Activated CD4-positive, alpha-beta T cell treated with anti-CD3 and anti-CD28 coated beads for 36 hours (primary cell): ENCODE measurements at regions of chr6 and their contacts with region 1.

Region 1: DNA sequence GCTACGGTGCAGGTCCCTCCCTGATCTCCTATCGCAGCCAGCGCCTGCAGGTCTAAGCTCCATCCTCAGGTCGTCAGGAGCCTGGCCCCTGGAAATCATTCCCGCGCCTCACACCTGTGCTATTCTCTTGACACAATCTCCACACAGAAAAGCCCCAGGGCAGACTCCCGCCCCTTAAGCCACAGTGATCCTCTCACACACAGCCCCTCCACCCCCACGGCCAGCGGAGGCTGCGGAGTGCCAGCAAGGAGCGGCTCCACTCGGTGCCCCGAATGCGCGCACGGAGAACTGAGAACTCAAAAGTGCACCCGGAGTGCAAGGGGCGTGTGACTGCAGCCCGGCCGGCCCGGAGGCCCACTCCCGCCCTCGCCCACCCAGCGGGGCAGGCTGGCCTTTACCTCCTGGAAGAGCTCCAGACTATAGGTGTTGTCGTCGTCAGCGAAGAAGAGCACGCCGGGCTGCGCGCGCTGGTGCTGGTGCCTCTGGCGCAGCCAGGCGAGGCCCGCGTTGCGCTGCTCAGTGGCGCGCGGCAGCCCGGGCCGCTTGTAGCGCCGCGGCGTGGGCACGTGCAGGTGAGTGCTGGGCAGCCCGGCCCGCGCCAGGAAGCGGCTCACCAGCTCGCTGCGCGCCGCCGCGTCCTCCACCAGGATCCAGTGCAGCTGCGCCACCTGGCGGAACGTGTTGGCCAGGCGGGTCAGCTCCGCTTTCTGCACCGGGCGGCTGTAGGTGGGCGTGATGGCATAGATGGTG is 1.2 kb downstream of the B3GAT2 start:
- DNase-seq: peak; percentile 94
- ATAC-seq: peak; percentile 95
- H3K4me3 Mint-ChIP-seq: peak overlapping the region; percentile 64
- H3K27ac Mint-ChIP-seq: no peak overlapping the region
- H3K4me1 Mint-ChIP-seq: peaks cover 14% of the 10 kb centered on the region
- H3K27me3 Mint-ChIP-seq: peaks cover 52% of the 10 kb centered on the region

Region 2: DNA sequence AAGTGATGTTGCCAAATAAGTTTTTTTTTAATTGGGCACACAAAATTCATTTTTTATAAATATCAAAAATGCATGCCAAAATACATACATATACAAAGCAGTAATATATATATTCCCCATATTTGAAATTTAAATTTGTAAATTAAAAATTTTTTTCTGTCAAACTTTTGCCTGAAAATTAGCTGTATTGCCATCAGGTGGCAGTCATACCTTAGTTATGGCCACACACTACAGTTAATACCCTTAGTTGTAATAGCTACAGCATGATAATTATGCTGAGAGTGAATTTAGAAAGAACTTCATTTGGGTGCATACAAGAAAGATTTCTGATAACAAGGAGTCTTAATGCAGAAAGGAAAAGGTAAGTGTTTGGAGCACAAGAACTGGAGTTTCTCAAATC is 435.0 kb before region 1 on chr6:
- CTCF ChIA-PET with region 1: interaction called, 7 read pairs
- POLR2A ChIA-PET with region 1: no interaction called
- intact Hi-C with region 1: loop called (anchors 5 kb)
- DNase-seq: no peak
- ATAC-seq: no peak
- H3K4me3 Mint-ChIP-seq: no peak overlapping the region
- H3K27ac Mint-ChIP-seq: no peak overlapping the region
- H3K4me1 Mint-ChIP-seq: peaks cover 6% of the 10 kb centered on the region
- H3K27me3 Mint-ChIP-seq: no peaks in the 10 kb centered on the region

Region 3: GRCh38 chr6:70706491-70707123 is 249.0 kb before region 1 on chr6:
- CTCF ChIA-PET with region 1: interaction called, 14 read pairs
- POLR2A ChIA-PET with region 1: no interaction called
- intact Hi-C with region 1: loop called (anchors 1 kb)
- DNase-seq: no peak
- ATAC-seq: no peak
- H3K4me3 Mint-ChIP-seq: no peak overlapping the region
- H3K27ac Mint-ChIP-seq: no peak overlapping the region
- H3K4me1 Mint-ChIP-seq: peaks cover 47% of the 10 kb centered on the region
- H3K27me3 Mint-ChIP-seq: no peaks in the 10 kb centered on the region

Region 4: DNA sequence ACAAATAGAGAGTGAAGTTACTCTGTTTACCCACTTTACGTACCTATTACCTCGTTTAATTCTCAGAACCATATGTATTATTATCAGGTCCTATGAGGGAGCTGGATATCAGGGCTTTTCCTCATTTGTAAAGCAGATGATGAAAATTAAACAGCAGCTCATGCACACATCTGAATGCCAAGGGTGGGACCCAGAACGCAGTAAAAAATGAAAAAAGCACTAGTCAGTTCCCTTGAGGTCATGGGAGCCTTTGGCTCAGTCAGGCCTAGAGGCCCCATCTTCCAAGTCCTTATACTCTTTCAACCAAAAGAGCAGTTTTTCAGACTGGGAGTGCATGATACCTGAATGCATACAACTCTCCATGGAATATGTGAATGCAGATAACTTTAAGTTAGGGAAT is 21.8 kb before region 1 on chr6:
- CTCF ChIA-PET with region 1: no interaction called
- POLR2A ChIA-PET with region 1: no interaction called
- intact Hi-C with region 1: no loop called
- DNase-seq: no peak
- ATAC-seq: no peak
- H3K4me3 Mint-ChIP-seq: no peak overlapping the region
- H3K27ac Mint-ChIP-seq: no peak overlapping the region
- H3K4me1 Mint-ChIP-seq: no peaks in the 10 kb centered on the region
- H3K27me3 Mint-ChIP-seq: peaks cover 13% of the 10 kb centered on the region

Region 5: GRCh38 chr6:71190809-71191208 is 235.2 kb after region 1 on chr6:
- CTCF ChIA-PET with region 1: no interaction called
- POLR2A ChIA-PET with region 1: no interaction called
- intact Hi-C with region 1: no loop called
- DNase-seq: no peak
- ATAC-seq: no peak
- H3K4me3 Mint-ChIP-seq: no peak overlapping the region
- H3K27ac Mint-ChIP-seq: no peak overlapping the region
- H3K4me1 Mint-ChIP-seq: no peaks in the 10 kb centered on the region
- H3K27me3 Mint-ChIP-seq: peaks cover 6% of the 10 kb centered on the region